GM10248 (cell line): ENCODE measurements at regions of chr1 and their contacts with region 1.

Region 1: DNA sequence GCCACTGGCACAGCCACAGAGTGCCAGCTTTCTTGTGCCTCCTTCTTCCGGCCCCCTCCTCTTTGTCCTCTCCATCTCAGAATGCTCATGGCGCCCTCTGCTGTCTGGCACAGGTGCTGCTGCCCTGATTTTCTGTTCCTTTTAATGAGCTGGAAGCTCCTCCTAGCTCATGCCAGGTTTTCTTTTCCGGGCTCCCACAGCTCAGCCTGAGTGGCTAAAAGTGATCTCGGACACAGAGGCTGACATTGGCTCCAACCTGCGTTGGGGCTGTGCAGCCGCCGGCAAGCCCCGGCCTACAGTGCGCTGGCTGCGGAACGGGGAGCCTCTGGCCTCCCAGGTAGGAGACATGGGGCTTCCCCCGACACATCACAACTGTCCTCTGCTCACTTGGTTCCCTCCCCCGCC is 18.7 kb downstream of the CNTN2 start:
- DNase-seq: peak; percentile 81
- CTCF ChIP-seq: peak; percentile 96

Region 2: GRCh38 chr1:204967451-204967850 is 94.2 kb before region 1 on chr1:
- CTCF ChIA-PET with region 1: interaction called, 19 read pairs
- POLR2A ChIA-PET with region 1: no interaction called
- DNase-seq: no peak
- CTCF ChIP-seq: no peak

Region 3: DNA sequence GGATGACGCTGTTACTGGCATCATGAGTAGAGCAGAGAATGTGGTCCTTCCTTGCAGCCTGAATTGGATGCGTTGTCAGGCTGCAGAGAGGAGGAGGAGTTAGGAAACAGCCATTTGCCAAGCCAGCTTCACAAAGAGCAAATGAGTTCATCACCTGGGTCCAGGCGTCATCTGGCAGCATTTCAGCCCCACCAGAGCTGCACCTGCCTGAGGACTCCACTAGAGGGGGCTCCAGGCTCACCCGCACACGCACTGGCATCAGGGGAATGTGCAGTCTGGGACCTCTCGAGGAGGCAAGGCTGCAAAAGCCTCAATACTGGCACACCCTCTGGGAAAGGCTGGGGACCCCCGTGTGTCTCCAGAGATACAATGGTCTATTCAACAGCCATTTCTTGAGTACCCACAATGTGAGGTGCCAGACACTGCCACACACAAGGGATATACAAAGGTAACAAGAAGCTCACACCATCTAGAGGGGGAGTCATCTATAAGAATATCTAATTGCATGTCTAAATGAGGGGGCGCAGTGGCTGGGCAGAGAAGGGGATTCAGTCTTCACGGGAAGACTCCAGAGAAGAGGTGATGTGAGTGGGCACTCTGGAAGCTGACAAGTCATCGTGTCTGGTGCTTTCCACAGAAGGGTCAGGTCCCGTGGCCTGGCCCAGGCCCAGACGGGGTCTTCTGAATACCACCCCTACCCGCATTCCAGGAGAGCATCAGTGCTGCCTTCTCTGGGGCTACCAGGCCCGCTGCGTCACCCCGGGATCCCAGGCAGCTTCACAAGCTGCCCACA is 72.2 kb before region 1 on chr1:
- CTCF ChIA-PET with region 1: interaction called, 150 read pairs
- POLR2A ChIA-PET with region 1: no interaction called
- DNase-seq: peak; percentile 87
- CTCF ChIP-seq: peak; percentile 92

Region 4: DNA sequence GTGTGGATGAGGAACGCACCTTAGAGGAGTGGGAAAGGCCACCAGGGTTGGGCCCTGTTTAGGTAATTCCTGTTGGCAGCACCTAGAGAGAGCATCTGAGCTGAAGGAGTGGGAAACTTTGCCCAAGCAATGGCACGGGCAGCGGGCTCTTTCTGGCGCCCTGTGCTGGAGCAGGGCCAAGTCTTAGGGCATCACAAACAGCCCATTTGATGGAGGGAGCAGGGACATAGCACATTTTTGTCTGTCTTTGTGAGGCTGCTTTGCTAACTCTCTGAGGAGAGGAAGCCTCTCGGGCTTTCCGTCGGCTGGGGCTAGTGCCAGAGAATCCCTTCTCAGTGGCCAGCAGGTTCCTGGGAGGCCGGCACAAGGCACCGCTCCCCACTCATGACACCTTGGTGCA is 41.2 kb before region 1 on chr1:
- CTCF ChIA-PET with region 1: interaction called, 10 read pairs
- POLR2A ChIA-PET with region 1: no interaction called
- DNase-seq: no peak
- CTCF ChIP-seq: no peak

Region 5: GRCh38 chr1:205048382-205048781 is 13.3 kb before region 1 on chr1:
- CTCF ChIA-PET with region 1: interaction called, 62 read pairs
- POLR2A ChIA-PET with region 1: no interaction called
- DNase-seq: no peak
- CTCF ChIP-seq: no peak

Region 6: DNA sequence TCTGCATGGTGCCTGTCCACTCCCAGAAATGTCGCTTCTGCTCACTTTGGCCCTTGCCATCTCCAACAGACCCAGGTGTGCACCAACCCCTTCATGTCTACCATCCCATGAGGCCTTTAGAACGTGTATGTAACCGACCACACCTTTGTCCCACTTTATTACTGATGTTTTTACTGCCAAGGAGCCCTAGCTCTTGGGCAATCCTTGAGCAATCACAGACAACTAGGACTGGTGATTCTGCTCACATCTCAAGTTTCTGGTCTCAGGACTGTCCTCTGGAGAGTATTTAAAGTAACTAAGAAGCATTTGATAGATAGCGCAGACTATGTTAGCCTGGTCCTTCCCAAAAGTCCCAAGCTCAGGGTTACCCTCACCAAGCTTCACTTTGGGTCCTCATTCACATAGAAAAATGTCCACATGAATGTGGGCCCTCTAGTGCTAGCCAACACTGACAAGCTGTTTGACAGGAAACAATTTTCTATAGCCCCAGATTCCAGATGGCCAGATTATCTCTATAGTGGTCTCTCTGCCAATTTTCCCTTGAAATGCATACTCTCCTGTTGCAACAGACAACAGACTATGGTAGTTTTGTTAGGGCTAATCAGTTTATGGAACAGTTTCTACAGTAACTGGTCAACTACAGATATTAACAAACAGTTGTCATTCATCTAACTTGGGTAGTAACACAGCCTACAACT is 29.5 kb after region 1 on chr1:
- CTCF ChIA-PET with region 1: interaction called, 13 read pairs
- POLR2A ChIA-PET with region 1: no interaction called
- DNase-seq: no peak
- CTCF ChIP-seq: no peak

Region 7: GRCh38 chr1:205150651-205151428 is 89.2 kb after region 1 on chr1:
- CTCF ChIA-PET with region 1: interaction called, 11 read pairs
- POLR2A ChIA-PET with region 1: no interaction called
- DNase-seq: no peak
- CTCF ChIP-seq: no peak